Heart right ventricle (tissue), 16 donors: ENCODE measurements at regions of chr18 and their contacts with region 1.

Region 1: GRCh38 chr18:10715791-10716190 is 190.0 kb downstream of the NAPG start:
- DNase-seq: no peak
- ATAC-seq: peak in 5 of 8 donors; percentile 44 to 94 (median 72)
- H3K4me3 ChIP-seq: no peak overlapping the region
- H3K27ac ChIP-seq: no peak overlapping the region
- H3K4me1 ChIP-seq: peaks cover 0 to 8% (median 0%) of the 10 kb centered on the region in 9 donors
- H3K27me3 ChIP-seq: no peaks in the 10 kb centered on the region
- CTCF ChIP-seq: no peak

Region 2: GRCh38 chr18:10560450-10561045 is 155.2 kb before region 1 on chr18:
- intact Hi-C with region 1: loop called in 2 of 10 experiments (anchors 5 to 10 kb)
- DNase-seq: peak; percentile 39 to 76
- ATAC-seq: peak; percentile 68 to 85 (median 79)
- H3K4me3 ChIP-seq: peak overlapping the region in 7 of 10 donors; percentile 13 to 45 (median 37)
- H3K27ac ChIP-seq: peak overlapping the region in 3 of 10 donors; percentile 31 to 57 (median 46)
- H3K4me1 ChIP-seq: peaks cover 0 to 18% (median 12%) of the 10 kb centered on the region in 9 donors
- H3K27me3 ChIP-seq: no peaks in the 10 kb centered on the region
- CTCF ChIP-seq: peak; percentile 64 to 82 (median 77)

Region 3: DNA sequence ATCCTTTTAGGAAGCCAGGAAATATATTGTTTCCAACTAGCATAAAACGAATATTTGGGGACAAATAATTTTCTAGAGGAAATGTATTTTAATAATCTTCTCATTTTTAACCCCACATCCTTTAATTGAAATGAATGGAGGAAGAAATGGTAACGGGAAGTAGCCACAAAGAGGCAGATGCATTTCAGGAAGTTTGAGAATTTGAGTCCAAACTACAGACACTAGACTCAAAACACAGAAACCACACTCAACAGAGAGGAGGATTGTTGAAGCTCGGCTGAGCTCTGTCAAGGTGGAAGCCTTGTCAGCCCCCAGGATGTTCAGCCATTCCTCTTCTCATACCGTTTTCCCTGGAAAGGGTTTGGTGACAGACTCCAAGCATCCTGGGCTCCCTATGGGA is 98.5 kb after region 1 on chr18:
- intact Hi-C with region 1: no loop called
- DNase-seq: no peak
- ATAC-seq: no peak
- H3K4me3 ChIP-seq: no peak overlapping the region
- H3K27ac ChIP-seq: no peak overlapping the region
- H3K4me1 ChIP-seq: no peaks in the 10 kb centered on the region
- H3K27me3 ChIP-seq: peaks cover 0 to 3% (median 0%) of the 10 kb centered on the region in 7 donors
- CTCF ChIP-seq: no peak